ENCODE measurements at regions of chr20 and their contacts with region 1.

Region 1: DNA sequence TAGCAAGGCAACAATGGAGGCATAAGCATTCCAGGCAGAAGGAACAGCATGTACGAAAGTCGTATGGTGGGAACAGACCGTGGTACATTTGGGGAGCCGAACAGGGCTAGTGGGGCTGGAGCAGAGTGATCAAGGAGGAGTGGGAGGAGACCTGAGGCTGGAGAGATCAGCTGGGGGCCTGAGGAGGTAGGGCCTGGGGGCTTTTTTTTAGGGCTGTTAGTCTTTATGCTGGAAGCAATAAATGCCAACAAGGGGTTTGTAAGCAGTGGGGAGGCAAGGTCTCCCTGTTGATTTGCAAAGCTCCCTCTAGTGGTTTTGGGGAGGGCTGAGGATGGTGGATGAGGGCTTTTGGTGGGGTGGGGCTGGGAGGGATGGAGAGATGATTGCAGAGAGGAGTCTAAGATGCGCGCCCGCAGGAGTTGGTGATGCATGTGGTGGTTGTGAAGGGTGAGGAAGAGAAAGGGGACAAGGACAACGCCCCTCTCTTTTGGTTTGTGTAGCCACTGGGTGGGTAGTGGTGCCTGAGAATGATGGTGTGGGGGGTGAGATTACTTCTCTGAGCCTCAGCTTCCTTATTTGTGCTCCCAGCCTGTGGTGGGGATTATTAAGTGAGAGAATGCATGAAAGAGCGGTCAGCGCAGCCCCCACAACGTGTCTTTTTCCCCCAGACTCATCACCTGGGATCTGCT is 74.1 kb upstream of the TOX2 start:
- DNase-seq: no peak
- ATAC-seq: no peak
- H3K4me3 ChIP-seq: no peak overlapping the region
- H3K27ac ChIP-seq: no peak overlapping the region
- H3K4me1 ChIP-seq: no peaks in the 10 kb centered on the region
- H3K27me3 ChIP-seq: peaks cover 0 to 6% (median 3%) of the 10 kb centered on the region in 3 donors
- CTCF ChIP-seq: no peak

Region 2: GRCh38 chr20:43563429-43563828 is 277.1 kb before region 1 on chr20:
- intact Hi-C with region 1: loop called in 1 of 2 experiments (anchors 5 kb)
- DNase-seq: no peak
- ATAC-seq: no peak
- H3K4me3 ChIP-seq: no peak overlapping the region
- H3K27ac ChIP-seq: no peak overlapping the region
- H3K4me1 ChIP-seq: no peaks in the 10 kb centered on the region
- H3K27me3 ChIP-seq: no peaks in the 10 kb centered on the region
- CTCF ChIP-seq: no peak

Region 3: DNA sequence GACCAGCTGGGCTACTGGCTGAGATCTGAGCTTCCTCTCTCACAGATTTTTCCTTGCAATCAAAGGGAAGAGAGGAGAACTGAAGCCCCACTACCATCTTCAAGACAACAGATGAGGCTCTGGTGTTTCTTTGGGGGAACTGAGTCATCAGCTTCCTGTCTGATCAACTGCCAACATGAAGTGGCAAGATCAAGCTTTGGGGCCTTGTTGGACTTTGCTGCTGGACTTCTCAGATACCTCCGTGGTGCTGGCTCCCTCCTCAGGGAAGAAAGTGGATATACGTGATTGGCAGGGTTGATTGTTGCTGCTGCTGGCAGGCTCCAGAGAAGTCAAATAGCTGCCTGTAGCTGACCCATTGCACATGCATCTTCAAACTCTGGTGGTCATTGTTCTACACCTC is 70.5 kb after region 1 on chr20:
- intact Hi-C with region 1: no loop called
- DNase-seq: no peak
- ATAC-seq: no peak
- H3K4me3 ChIP-seq: no peak overlapping the region
- H3K27ac ChIP-seq: no peak overlapping the region
- H3K4me1 ChIP-seq: no peaks in the 10 kb centered on the region
- H3K27me3 ChIP-seq: peaks cover 0 to 34% (median 16%) of the 10 kb centered on the region in 3 donors
- CTCF ChIP-seq: no peak

Region 4: GRCh38 chr20:44979090-44979621 is 1138.6 kb after region 1 on chr20:
- intact Hi-C with region 1: loop called in 1 of 2 experiments (anchors 10 kb)
- DNase-seq: no peak
- ATAC-seq: peak in 1 of 4 donors; percentile 44
- H3K4me3 ChIP-seq: no peak overlapping the region
- H3K27ac ChIP-seq: peak overlapping the region; percentile 18
- H3K4me1 ChIP-seq: no peaks in the 10 kb centered on the region
- H3K27me3 ChIP-seq: no peaks in the 10 kb centered on the region
- CTCF ChIP-seq: no peak

Measured in psoas muscle (tissue), 8 donors.